HEK293T (cell line): ENCODE measurements at regions of chr9 and their contacts with region 1.

Region 1: DNA sequence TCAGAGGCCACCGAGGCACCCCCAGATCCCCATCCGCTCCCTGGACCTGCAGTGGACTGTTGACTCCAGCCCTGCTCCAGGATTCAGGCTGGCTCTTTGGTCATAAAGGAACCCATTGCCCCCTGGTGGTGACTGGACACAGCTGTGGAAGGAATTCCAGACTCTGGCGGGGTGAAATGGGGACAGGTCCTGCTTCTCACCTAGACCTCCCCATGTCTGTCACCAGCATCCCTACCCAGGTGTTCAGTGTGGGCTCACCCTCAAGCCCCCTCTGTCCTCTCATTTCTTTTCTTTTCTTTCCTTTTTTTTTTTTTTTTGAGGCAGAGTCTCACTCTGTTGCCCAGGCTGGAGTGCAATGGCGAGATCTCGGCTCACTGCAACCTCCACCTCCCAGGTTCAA is 25.5 kb upstream of the STXBP1 start:
- DNase-seq: peak; percentile 79

Region 2: GRCh38 chr9:126980231-126980630 is 606.3 kb before region 1 on chr9:
- CTCF ChIA-PET with region 1: no interaction called
- POLR2A ChIA-PET with region 1: no interaction called
- DNase-seq: no peak

Region 3: DNA sequence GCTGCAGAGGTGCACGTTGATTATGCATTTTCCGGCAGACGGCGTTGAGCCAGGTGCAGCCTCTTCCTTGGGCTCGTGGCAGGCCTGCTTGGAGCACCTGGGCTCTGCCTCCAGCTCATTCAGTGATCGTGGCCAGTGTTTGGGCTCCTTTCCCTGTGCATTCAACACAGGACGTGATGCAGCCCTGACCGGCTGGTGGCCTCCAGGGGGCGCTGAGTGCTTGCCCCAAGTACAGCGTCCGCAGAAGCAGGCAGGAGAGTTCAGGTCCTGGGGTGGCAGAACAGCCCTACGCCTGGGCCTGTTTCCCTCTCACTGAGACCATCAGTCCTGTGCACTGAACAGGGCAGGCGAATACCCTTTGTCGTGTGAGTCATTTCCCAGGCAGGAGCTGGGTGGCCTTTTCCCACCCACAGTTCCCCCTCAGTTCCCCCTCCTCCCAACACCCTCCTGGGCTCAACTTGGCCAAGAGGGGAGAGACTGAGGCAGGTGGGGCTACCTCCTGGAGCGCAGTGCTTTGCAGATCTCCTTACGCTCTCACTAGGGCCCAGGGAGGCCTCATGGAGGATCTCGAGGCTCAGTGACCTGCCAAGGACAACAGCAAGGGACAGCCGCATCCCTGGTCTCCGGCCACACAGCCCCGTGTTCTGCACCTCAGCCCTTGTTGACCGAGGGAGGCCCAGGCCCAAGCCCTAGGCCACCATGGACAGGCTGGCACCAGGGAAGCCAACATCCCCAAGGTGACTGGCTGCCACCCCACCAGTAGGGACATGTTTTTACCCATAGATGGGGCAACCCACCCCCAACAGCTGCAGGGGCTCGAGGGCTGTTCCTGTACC is 82.4 kb before region 1 on chr9:
- CTCF ChIA-PET with region 1: interaction called, 13 read pairs
- POLR2A ChIA-PET with region 1: no interaction called
- DNase-seq: peak; percentile 83

Region 4: GRCh38 chr9:127614961-127615360 is 28.4 kb after region 1 on chr9:
- CTCF ChIA-PET with region 1: no interaction called
- POLR2A ChIA-PET with region 1: no interaction called
- DNase-seq: no peak

Region 5: GRCh38 chr9:127723450-127723849 is 136.9 kb after region 1 on chr9:
- CTCF ChIA-PET with region 1: no interaction called
- POLR2A ChIA-PET with region 1: no interaction called
- DNase-seq: no peak

Region 6: GRCh38 chr9:127734747-127735529 is 148.4 kb after region 1 on chr9 and contains the start of gene TOR2A:
- CTCF ChIA-PET with region 1: interaction called, 14 read pairs
- POLR2A ChIA-PET with region 1: interaction called, 7 read pairs
- DNase-seq: peak; percentile 98